Activated CD4-positive, alpha-beta T cell treated with anti-CD3 and anti-CD28 coated beads for 36 hours (primary cell): ENCODE measurements at regions of chr4 and their contacts with region 1.

Region 1: GRCh38 chr4:189792924-189793618 is 147.6 kb upstream of the FRG1 start:
- DNase-seq: peak; percentile 82
- ATAC-seq: peak; percentile 94
- H3K4me3 Mint-ChIP-seq: no peak overlapping the region
- H3K27ac Mint-ChIP-seq: no peak overlapping the region
- H3K4me1 Mint-ChIP-seq: no peaks in the 10 kb centered on the region
- H3K27me3 Mint-ChIP-seq: peaks cover 5% of the 10 kb centered on the region

Region 2: DNA sequence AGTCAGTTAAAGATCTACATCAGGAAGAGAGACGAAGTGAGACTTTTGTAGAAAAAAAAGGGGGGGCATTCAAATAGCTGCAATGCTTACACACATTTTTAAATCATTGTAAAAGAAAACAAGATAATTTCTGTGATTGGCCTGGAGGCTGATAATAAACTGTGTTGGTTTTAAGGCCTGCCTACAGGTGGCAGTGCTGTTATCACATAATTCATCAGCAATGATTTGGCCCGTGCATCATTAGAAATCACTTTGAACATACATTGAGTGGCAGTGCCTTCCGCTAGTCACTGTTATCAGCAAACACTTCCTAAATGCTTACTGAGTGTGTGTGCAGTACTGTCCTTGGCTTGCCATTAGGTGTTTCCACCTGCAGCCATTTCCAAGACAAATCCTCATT is 821.9 kb before region 1 on chr4:
- CTCF ChIA-PET with region 1: no interaction called
- POLR2A ChIA-PET with region 1: interaction called, 3 read pairs
- intact Hi-C with region 1: loop called in 1 of 2 experiments (anchors 2 kb)
- DNase-seq: no peak
- ATAC-seq: no peak
- H3K4me3 Mint-ChIP-seq: no peak overlapping the region
- H3K27ac Mint-ChIP-seq: no peak overlapping the region
- H3K4me1 Mint-ChIP-seq: no peaks in the 10 kb centered on the region
- H3K27me3 Mint-ChIP-seq: no peaks in the 10 kb centered on the region

Region 3: GRCh38 chr4:189436207-189436606 is 356.9 kb before region 1 on chr4:
- CTCF ChIA-PET with region 1: no interaction called
- POLR2A ChIA-PET with region 1: no interaction called
- intact Hi-C with region 1: loop called in 1 of 2 experiments (anchors 5 kb)
- DNase-seq: no peak
- ATAC-seq: no peak
- H3K4me3 Mint-ChIP-seq: no peak overlapping the region
- H3K27ac Mint-ChIP-seq: no peak overlapping the region
- H3K4me1 Mint-ChIP-seq: no peaks in the 10 kb centered on the region
- H3K27me3 Mint-ChIP-seq: no peaks in the 10 kb centered on the region

Region 4: DNA sequence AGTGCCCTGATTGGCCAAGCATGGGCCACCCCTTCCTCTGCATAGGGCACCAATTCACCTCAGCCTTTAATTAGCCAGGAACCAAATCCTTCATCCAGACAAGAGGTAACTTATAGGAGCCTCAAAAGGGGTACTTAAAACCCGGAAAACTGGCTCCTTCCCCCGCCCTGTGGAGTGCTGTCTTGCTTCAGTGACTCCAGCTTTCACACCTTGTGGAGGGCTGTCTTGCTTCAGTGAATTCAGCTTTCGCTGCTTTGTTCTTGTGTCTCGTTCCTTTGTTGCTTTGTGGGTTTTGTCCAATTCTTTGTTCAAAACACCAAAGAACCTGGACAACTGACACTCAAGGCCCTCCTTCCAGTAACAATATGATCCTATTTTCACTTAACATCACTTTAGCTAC is 65.4 kb after region 1 on chr4:
- CTCF ChIA-PET with region 1: no interaction called
- POLR2A ChIA-PET with region 1: no interaction called
- intact Hi-C with region 1: no loop called
- DNase-seq: no peak
- ATAC-seq: no peak
- H3K4me3 Mint-ChIP-seq: no peak overlapping the region
- H3K27ac Mint-ChIP-seq: no peak overlapping the region
- H3K4me1 Mint-ChIP-seq: no peaks in the 10 kb centered on the region
- H3K27me3 Mint-ChIP-seq: no peaks in the 10 kb centered on the region

Region 5: DNA sequence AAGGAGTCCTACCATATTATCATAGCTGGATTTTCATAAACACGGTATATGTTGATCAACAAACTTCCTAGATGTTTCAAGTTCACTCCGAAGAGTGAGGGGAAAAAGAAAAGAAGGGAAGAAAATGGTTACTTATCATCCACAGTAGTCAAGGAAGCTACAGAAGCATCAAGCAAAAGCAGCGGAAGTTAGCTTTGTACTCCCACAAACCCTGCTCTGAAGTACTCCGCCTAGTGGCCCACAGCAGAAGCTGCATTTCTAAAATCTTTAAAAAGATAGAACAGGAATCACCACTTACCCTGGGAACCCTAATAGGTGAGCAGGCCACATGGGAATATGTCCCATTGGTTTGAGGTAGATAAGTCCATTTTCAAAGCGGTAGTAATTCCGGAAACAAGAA is 119.1 kb after region 1 on chr4:
- CTCF ChIA-PET with region 1: no interaction called
- POLR2A ChIA-PET with region 1: no interaction called
- intact Hi-C with region 1: loop called in 1 of 2 experiments (anchors 10 kb)
- DNase-seq: no peak
- ATAC-seq: no peak
- H3K4me3 Mint-ChIP-seq: no peak overlapping the region
- H3K27ac Mint-ChIP-seq: no peak overlapping the region
- H3K4me1 Mint-ChIP-seq: no peaks in the 10 kb centered on the region
- H3K27me3 Mint-ChIP-seq: no peaks in the 10 kb centered on the region

Region 6: GRCh38 chr4:190020790-190021717 is 228.0 kb after region 1 on chr4:
- CTCF ChIA-PET with region 1: no interaction called
- POLR2A ChIA-PET with region 1: no interaction called
- intact Hi-C with region 1: no loop called
- DNase-seq: peak; percentile 55
- ATAC-seq: peak; percentile 44
- H3K4me3 Mint-ChIP-seq: peak overlapping the region; percentile 57
- H3K27ac Mint-ChIP-seq: no peak overlapping the region
- H3K4me1 Mint-ChIP-seq: peaks cover 29% of the 10 kb centered on the region
- H3K27me3 Mint-ChIP-seq: peaks cover 48% of the 10 kb centered on the region